GM12878 (cell line): ENCODE measurements at regions of chr10 and their contacts with region 1.

Region 1: DNA sequence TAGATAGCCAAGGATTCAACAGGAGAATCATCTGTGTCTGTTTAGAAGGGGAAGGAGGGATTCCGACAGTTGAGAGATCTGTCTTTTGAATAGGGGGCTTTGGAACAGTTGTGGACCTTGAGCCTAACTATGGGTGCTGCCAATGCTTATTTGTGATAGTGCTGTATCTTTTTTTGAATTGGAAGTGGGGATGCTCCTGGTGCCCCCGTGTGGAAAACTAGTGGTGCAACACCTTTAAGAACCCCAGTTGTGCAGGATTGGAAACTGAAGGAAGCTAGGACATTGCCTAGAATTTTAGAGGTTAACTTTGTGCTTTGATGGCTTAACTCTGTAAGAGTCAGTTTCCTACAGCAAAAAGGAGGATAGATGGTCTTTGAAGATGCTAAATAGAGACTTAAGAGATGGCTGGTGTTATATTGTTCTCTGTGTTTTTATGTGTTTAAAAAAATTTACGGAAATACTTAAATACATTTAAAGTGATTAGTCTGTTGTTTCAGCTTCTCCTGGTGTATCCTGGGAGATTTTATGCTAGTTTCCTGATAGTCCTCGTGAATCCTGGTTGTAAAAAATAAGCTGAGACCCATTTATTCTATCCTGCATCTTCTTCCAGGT is 69.3 kb downstream of the AP3M1 start:
- DNase-seq: no peak
- ATAC-seq: peak; percentile 37; the same call in 2 of the 3 replicates
- H3K4me3 ChIP-seq: no peak overlapping the region
- H3K27ac ChIP-seq: no peak overlapping the region
- H3K4me1 ChIP-seq: peaks cover 36% of the 10 kb centered on the region
- H3K27me3 ChIP-seq: no peaks in the 10 kb centered on the region
- CTCF ChIP-seq: peak; percentile 70 to 77 (median 71)
- EP300 ChIP-seq: no peak
- POLR2A ChIP-seq: no peak
- RAD21 ChIP-seq: peak; percentile 83

Region 2: DNA sequence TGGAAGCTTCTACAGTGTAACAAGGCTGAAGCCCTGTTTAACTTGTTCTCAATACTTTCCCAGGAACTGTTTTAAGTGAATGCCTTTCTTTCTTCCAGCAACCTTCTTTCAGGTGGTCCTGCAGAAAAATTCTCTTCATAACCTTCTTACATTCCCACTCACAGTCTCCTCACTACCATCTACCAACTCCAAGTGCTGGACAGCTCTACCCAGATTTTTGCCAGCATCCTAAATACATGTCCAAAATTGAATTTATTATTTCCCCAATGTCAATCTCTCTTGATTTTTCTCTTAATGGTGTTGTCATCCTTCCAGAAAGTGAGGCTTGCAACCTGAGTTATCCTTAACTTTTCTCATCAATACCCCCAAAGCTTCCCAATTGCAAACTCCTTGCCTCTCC is 770.8 kb before region 1 on chr10:
- CTCF ChIA-PET with region 1: no interaction called
- POLR2A ChIA-PET with region 1: no interaction called
- RAD21 ChIA-PET with region 1: no interaction called
- SMC1A ChIA-PET with region 1: no interaction called
- in situ Hi-C with region 1: no loop called
- intact Hi-C with region 1: no loop called
- DNase-seq: no peak
- ATAC-seq: no peak
- H3K4me3 ChIP-seq: no peak overlapping the region
- H3K27ac ChIP-seq: no peak overlapping the region
- H3K4me1 ChIP-seq: no peaks in the 10 kb centered on the region
- H3K27me3 ChIP-seq: no peaks in the 10 kb centered on the region
- CTCF ChIP-seq: no peak
- EP300 ChIP-seq: no peak
- POLR2A ChIP-seq: no peak
- RAD21 ChIP-seq: no peak

Region 3: DNA sequence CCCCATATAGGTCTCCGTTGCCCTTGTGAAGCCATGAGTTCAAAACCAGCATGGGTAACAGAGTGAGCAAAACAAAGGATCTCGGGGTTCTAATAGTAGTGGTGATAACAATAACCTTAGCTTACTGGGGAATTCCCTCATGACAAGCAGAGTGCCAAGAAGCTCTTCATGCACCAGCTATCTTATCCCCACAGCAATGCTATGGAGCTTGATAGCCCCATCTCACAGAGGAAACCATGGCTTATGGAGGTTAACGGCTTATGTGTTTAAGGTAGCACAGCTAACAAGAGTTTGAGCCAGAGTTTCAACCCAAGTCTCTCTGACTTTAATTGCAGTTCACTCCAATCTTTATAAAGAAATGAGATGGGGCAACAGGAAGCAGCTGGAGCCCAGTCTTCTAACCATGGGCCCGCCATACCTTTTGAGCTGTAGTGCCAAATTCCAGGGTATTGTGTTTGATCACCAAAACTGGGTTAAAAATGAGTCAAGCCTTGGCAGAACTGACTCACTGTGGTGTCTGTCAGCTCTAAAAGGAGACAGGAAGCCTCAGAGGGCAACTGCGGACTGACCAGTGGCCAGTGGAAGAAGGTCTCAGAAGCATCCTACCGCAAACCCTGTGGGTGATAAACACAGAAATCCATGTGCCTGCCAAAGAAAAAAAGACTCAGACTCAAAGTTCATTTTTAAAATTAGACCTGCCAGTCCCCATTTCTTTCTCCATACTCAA is 186.9 kb before region 1 on chr10:
- CTCF ChIA-PET with region 1: interaction called, 154 read pairs
- POLR2A ChIA-PET with region 1: interaction called, 3 read pairs
- RAD21 ChIA-PET with region 1: interaction called, 105 read pairs
- SMC1A ChIA-PET with region 1: interaction called, 160 read pairs
- in situ Hi-C with region 1: loop called (anchors 25 kb)
- intact Hi-C with region 1: no loop called
- DNase-seq: no peak
- ATAC-seq: peak; percentile 87
- H3K4me3 ChIP-seq: no peak overlapping the region
- H3K27ac ChIP-seq: no peak overlapping the region
- H3K4me1 ChIP-seq: no peaks in the 10 kb centered on the region
- H3K27me3 ChIP-seq: no peaks in the 10 kb centered on the region
- CTCF ChIP-seq: no peak
- EP300 ChIP-seq: no peak
- POLR2A ChIP-seq: no peak
- RAD21 ChIP-seq: no peak

Region 4: GRCh38 chr10:73956476-73957359 is 124.6 kb before region 1 on chr10:
- CTCF ChIA-PET with region 1: interaction called, 92 read pairs
- POLR2A ChIA-PET with region 1: interaction called, 6 read pairs
- RAD21 ChIA-PET with region 1: interaction called, 58 read pairs
- SMC1A ChIA-PET with region 1: interaction called, 38 read pairs
- in situ Hi-C with region 1: no loop called
- intact Hi-C with region 1: loop called (anchors 1 kb)
- DNase-seq: peak; percentile 66
- ATAC-seq: peak; percentile 72
- H3K4me3 ChIP-seq: peak overlapping the region; percentile 55
- H3K27ac ChIP-seq: peak overlapping the region; percentile 80
- H3K4me1 ChIP-seq: peaks cover 54% of the 10 kb centered on the region
- H3K27me3 ChIP-seq: no peaks in the 10 kb centered on the region
- CTCF ChIP-seq: no peak
- EP300 ChIP-seq: peak; percentile 56 to 79
- POLR2A ChIP-seq: no peak
- RAD21 ChIP-seq: no peak

Region 5: DNA sequence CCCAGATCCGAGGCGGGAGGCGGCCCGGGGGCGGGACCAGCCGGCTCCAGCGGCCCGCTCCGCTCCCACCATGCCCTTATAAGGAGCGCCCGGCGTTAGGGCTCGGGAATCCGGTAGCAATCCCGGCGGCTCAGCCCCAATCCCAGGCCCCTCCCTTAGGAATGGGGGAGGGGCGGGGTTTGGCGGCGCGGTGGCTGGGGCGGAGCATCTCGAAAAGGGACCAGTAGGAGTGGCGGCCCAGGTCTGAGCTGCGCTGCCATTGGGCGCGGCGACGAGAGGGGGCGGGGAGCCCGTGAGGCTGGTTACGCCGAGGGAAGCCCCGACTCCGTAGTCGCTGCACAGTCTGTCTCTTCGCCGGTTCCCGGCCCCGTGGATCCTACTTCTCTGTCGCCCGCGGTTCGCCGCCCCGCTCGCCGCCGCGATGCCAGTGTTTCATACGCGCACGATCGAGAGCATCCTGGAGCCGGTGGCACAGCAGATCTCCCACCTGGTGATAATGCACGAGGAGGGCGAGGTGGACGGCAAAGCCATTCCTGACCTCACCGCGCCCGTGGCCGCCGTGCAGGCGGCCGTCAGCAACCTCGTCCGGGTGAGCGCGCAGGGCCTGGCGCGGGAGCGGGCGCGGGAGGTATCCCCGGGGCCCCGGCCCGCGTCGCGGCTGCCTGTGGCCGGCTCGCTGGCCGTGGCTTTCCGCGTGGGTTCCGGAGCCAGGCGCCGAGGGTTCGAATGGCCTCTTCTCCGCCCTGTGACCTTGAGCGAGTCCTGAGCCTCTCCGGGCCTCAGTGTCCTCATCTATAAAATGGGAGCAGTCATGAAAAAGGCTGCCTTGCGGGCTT is 83.3 kb before region 1 on chr10 and contains the start of gene VCL:
- CTCF ChIA-PET with region 1: interaction called, 11 read pairs
- POLR2A ChIA-PET with region 1: interaction called, 3 read pairs
- RAD21 ChIA-PET with region 1: interaction called, 3 read pairs
- SMC1A ChIA-PET with region 1: interaction called, 18 read pairs
- in situ Hi-C with region 1: no loop called
- intact Hi-C with region 1: no loop called
- DNase-seq: peak; percentile 64
- ATAC-seq: peak; percentile 99
- H3K4me3 ChIP-seq: peak within 1 kb of the TSS; percentile 86
- H3K27ac ChIP-seq: peak within 1 kb of the TSS; percentile 67
- H3K4me1 ChIP-seq: peaks cover 15% of the 10 kb centered on the region
- H3K27me3 ChIP-seq: no peaks in the 10 kb centered on the region
- CTCF ChIP-seq: no peak
- EP300 ChIP-seq: no peak
- POLR2A ChIP-seq: peak; percentile 92
- RAD21 ChIP-seq: no peak
- polyA plus RNA-seq, gene VCL: 6.7 to 9.2 TPM

Region 6: DNA sequence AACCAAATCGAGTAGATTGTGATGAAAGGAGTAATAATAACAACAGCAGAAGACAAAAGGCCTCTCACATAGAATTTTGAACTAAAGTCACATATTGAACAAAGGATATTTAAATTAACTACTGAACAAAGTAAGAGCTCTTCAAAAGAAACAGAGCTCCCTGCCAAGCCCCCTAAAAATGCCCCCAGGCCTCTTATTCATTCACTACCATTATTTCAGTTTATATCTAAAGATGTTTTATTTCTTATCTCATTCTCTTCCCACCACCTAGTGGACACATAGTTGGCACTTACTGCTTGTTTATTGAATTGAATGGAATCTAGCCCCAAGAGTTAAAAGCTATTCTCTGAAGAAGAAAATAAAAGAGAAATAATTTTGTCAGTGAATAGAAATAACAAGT is 46.0 kb before region 1 on chr10:
- CTCF ChIA-PET with region 1: interaction called, 10 read pairs
- POLR2A ChIA-PET with region 1: no interaction called
- RAD21 ChIA-PET with region 1: interaction called, 7 read pairs
- SMC1A ChIA-PET with region 1: interaction called, 4 read pairs
- in situ Hi-C with region 1: no loop called
- intact Hi-C with region 1: no loop called
- DNase-seq: no peak
- ATAC-seq: no peak
- H3K4me3 ChIP-seq: no peak overlapping the region
- H3K27ac ChIP-seq: no peak overlapping the region
- H3K4me1 ChIP-seq: peaks cover 11% of the 10 kb centered on the region
- H3K27me3 ChIP-seq: no peaks in the 10 kb centered on the region
- CTCF ChIP-seq: peak in 1 of 3 experiments; percentile 14; a peak in 2 of 6 replicates
- EP300 ChIP-seq: no peak
- POLR2A ChIP-seq: no peak
- RAD21 ChIP-seq: peak; percentile 46; the same call in 1 of the 2 replicates

Region 7: GRCh38 chr10:74096777-74097176 is 15.5 kb after region 1 on chr10:
- CTCF ChIA-PET with region 1: interaction called, 53 read pairs
- POLR2A ChIA-PET with region 1: interaction called, 4 read pairs
- RAD21 ChIA-PET with region 1: interaction called, 13 read pairs
- SMC1A ChIA-PET with region 1: interaction called, 31 read pairs
- in situ Hi-C with region 1: no loop called
- intact Hi-C with region 1: no loop called
- DNase-seq: peak; percentile 69
- ATAC-seq: peak; percentile 99
- H3K4me3 ChIP-seq: no peak overlapping the region
- H3K27ac ChIP-seq: peak overlapping the region; percentile 30; the same call in 1 of the 2 replicates
- H3K4me1 ChIP-seq: peaks cover 8% of the 10 kb centered on the region
- H3K27me3 ChIP-seq: no peaks in the 10 kb centered on the region
- CTCF ChIP-seq: no peak
- EP300 ChIP-seq: 0 out of 4 replicates have a peak, but pooled peaks of 1 of the 2 experiments have one; percentile 59
- POLR2A ChIP-seq: no peak
- RAD21 ChIP-seq: no peak

Region 8: DNA sequence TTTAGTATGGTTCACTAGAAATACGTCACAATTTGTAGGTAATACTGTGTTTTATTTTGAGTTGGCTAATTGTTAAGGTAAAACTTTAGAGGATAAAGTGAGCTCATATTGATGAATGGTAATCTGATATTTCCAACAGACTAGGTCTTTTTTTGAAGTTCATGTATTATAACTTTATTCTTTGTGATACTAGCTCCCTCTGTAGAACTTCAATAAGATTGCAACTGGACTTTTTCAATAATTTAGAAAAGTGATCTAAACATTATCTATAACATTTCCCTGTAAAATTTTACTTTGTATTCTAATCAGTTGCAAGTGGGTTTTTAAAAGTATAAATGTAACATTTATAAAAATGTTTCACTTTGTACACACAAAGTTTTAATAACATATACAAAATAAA is 153.3 kb after region 1 on chr10:
- CTCF ChIA-PET with region 1: interaction called, 14 read pairs
- POLR2A ChIA-PET with region 1: no interaction called
- RAD21 ChIA-PET with region 1: interaction called, 4 read pairs
- SMC1A ChIA-PET with region 1: interaction called, 3 read pairs
- in situ Hi-C with region 1: no loop called
- intact Hi-C with region 1: no loop called
- DNase-seq: no peak
- ATAC-seq: no peak; the same call in 2 of the 3 replicates
- H3K4me3 ChIP-seq: no peak overlapping the region
- H3K27ac ChIP-seq: no peak overlapping the region
- H3K4me1 ChIP-seq: no peaks in the 10 kb centered on the region
- H3K27me3 ChIP-seq: no peaks in the 10 kb centered on the region
- CTCF ChIP-seq: peak in 2 of 3 experiments; percentile 35 to 43; a peak in 2 of 6 replicates
- EP300 ChIP-seq: no peak
- POLR2A ChIP-seq: no peak
- RAD21 ChIP-seq: peak; percentile 39